CD4-positive, alpha-beta memory T cell (primary cell): ENCODE measurements at regions of chr11 and their contacts with region 1.

Region 1: GRCh38 chr11:3091791-3092602 is 34.8 kb upstream of the CARS1 start:
- DNase-seq: peak; percentile 64 to 74 (median 68)
- H3K4me3 ChIP-seq: no peak overlapping the region
- H3K4me3 Mint-ChIP-seq: no peak overlapping the region
- H3K27ac ChIP-seq: no peak overlapping the region
- H3K27ac Mint-ChIP-seq: no peak overlapping the region
- H3K4me1 ChIP-seq: no peaks in the 10 kb centered on the region
- H3K4me1 Mint-ChIP-seq: no peaks in the 10 kb centered on the region
- H3K27me3 ChIP-seq: no peaks in the 10 kb centered on the region
- H3K27me3 Mint-ChIP-seq: peaks cover 0 to 3% of the 10 kb centered on the region in 2 donors

Region 2: GRCh38 chr11:2428322-2428795 is 663.6 kb before region 1 on chr11:
- CTCF ChIA-PET with region 1: no interaction called
- POLR2A ChIA-PET with region 1: no interaction called
- intact Hi-C with region 1: loop called (anchors 1 kb)
- DNase-seq: peak; percentile 77 to 83 (median 80)
- H3K4me3 ChIP-seq: no peak overlapping the region
- H3K4me3 Mint-ChIP-seq: no peak overlapping the region
- H3K27ac ChIP-seq: no peak overlapping the region
- H3K27ac Mint-ChIP-seq: no peak overlapping the region
- H3K4me1 ChIP-seq: no peaks in the 10 kb centered on the region
- H3K4me1 Mint-ChIP-seq: no peaks in the 10 kb centered on the region
- H3K27me3 ChIP-seq: no peaks in the 10 kb centered on the region
- H3K27me3 Mint-ChIP-seq: no peaks in the 10 kb centered on the region

Region 3: GRCh38 chr11:2892215-2893020 is 199.6 kb before region 1 on chr11:
- CTCF ChIA-PET with region 1: interaction called, 19 read pairs
- POLR2A ChIA-PET with region 1: interaction called, 3 read pairs
- intact Hi-C with region 1: loop called (anchors 1 kb)
- DNase-seq: peak; percentile 50 to 66 (median 59)
- H3K4me3 ChIP-seq: peak overlapping the region in 1 of 2 donors; percentile 79
- H3K4me3 Mint-ChIP-seq: peak overlapping the region; percentile 73 to 85 (median 78)
- H3K27ac ChIP-seq: peak overlapping the region; percentile 36
- H3K27ac Mint-ChIP-seq: peak overlapping the region; percentile 82 to 93 (median 89)
- H3K4me1 ChIP-seq: peaks cover 35% of the 10 kb centered on the region
- H3K4me1 Mint-ChIP-seq: peaks cover 6 to 39% (median 24%) of the 10 kb centered on the region in 4 donors
- H3K27me3 ChIP-seq: no peaks in the 10 kb centered on the region
- H3K27me3 Mint-ChIP-seq: no peaks in the 10 kb centered on the region

Region 4: GRCh38 chr11:2975594-2975993 is 116.4 kb before region 1 on chr11:
- CTCF ChIA-PET with region 1: interaction called, 25 read pairs
- POLR2A ChIA-PET with region 1: interaction called, 7 read pairs
- intact Hi-C with region 1: loop called (anchors 1 kb)
- DNase-seq: peak; percentile 47 to 63 (median 49)
- H3K4me3 ChIP-seq: no peak overlapping the region
- H3K4me3 Mint-ChIP-seq: no peak overlapping the region
- H3K27ac ChIP-seq: no peak overlapping the region
- H3K27ac Mint-ChIP-seq: peak overlapping the region in 3 of 7 donors; percentile 30 to 69 (median 51)
- H3K4me1 ChIP-seq: peaks cover 12% of the 10 kb centered on the region
- H3K4me1 Mint-ChIP-seq: peaks cover 21 to 44% (median 36%) of the 10 kb centered on the region in 4 donors
- H3K27me3 ChIP-seq: no peaks in the 10 kb centered on the region
- H3K27me3 Mint-ChIP-seq: no peaks in the 10 kb centered on the region

Region 5: GRCh38 chr11:3037040-3037944 is 54.7 kb before region 1 on chr11:
- CTCF ChIA-PET with region 1: interaction called, 89 read pairs
- POLR2A ChIA-PET with region 1: interaction called, 5 read pairs
- intact Hi-C with region 1: loop called (anchors 1 kb)
- DNase-seq: peak; percentile 28 to 62 (median 38)
- H3K4me3 ChIP-seq: no peak overlapping the region
- H3K4me3 Mint-ChIP-seq: peak overlapping the region in 1 of 8 donors; percentile 5
- H3K27ac ChIP-seq: no peak overlapping the region
- H3K27ac Mint-ChIP-seq: peak overlapping the region in 6 of 7 donors; percentile 4 to 62 (median 36)
- H3K4me1 ChIP-seq: peaks cover 14% of the 10 kb centered on the region
- H3K4me1 Mint-ChIP-seq: peaks cover 8 to 32% (median 24%) of the 10 kb centered on the region in 4 donors
- H3K27me3 ChIP-seq: no peaks in the 10 kb centered on the region
- H3K27me3 Mint-ChIP-seq: no peaks in the 10 kb centered on the region

Region 6: GRCh38 chr11:3153291-3153861 is 61.4 kb after region 1 on chr11:
- CTCF ChIA-PET with region 1: no interaction called
- POLR2A ChIA-PET with region 1: no interaction called
- intact Hi-C with region 1: no loop called
- DNase-seq: peak in 1 of 5 donors; percentile 22
- H3K4me3 ChIP-seq: no peak overlapping the region
- H3K4me3 Mint-ChIP-seq: no peak overlapping the region
- H3K27ac ChIP-seq: no peak overlapping the region
- H3K27ac Mint-ChIP-seq: no peak overlapping the region
- H3K4me1 ChIP-seq: no peaks in the 10 kb centered on the region
- H3K4me1 Mint-ChIP-seq: peaks cover 0 to 5% (median 2%) of the 10 kb centered on the region in 4 donors
- H3K27me3 ChIP-seq: no peaks in the 10 kb centered on the region
- H3K27me3 Mint-ChIP-seq: peaks cover 0 to 1% of the 10 kb centered on the region in 2 donors